ENCODE measurements at regions of chr4 and their contacts with region 1.

Region 1: DNA sequence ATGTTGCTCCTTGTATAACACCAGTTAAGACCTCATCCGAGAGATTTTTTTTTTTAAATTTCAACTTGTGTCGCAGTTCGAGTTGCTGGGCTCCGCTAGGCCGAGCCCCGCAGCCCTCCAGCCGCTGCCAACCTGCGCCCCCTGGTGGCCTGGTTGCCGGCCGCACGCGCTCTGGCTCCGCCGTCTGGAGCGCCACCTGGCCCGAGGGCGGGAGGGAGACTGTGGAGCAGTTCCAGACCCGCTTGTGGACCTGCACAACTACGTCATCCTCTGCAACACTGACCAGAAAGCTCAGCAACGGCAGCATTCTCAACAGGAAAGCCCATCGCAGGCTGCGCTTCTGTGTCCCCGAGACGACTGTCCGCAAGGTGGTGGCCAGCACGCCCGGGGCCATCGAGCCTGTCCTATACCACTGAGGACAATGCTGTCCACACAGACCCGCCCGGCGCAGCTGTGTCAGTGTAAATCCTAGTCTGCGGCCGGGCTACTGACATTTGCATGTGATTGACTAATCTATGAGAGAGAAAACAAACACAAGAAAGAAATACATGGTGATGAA is 39.1 kb downstream of the ARL9 start:
- DNase-seq: peak; percentile 75 to 86 (median 79)
- H3K4me3 ChIP-seq: peak overlapping the region; percentile 21
- H3K4me3 Mint-ChIP-seq: peak overlapping the region; percentile 38 to 76 (median 59)
- H3K27ac ChIP-seq: no peak overlapping the region
- H3K27ac Mint-ChIP-seq: peak overlapping the region in 2 of 8 donors; percentile 27 to 34
- H3K4me1 ChIP-seq: peaks cover 8% of the 10 kb centered on the region
- H3K4me1 Mint-ChIP-seq: peaks cover 11 to 20% (median 13%) of the 10 kb centered on the region in 3 donors
- H3K27me3 ChIP-seq: no peaks in the 10 kb centered on the region
- H3K27me3 Mint-ChIP-seq: peaks cover 7 to 24% of the 10 kb centered on the region in 2 donors

Region 2: DNA sequence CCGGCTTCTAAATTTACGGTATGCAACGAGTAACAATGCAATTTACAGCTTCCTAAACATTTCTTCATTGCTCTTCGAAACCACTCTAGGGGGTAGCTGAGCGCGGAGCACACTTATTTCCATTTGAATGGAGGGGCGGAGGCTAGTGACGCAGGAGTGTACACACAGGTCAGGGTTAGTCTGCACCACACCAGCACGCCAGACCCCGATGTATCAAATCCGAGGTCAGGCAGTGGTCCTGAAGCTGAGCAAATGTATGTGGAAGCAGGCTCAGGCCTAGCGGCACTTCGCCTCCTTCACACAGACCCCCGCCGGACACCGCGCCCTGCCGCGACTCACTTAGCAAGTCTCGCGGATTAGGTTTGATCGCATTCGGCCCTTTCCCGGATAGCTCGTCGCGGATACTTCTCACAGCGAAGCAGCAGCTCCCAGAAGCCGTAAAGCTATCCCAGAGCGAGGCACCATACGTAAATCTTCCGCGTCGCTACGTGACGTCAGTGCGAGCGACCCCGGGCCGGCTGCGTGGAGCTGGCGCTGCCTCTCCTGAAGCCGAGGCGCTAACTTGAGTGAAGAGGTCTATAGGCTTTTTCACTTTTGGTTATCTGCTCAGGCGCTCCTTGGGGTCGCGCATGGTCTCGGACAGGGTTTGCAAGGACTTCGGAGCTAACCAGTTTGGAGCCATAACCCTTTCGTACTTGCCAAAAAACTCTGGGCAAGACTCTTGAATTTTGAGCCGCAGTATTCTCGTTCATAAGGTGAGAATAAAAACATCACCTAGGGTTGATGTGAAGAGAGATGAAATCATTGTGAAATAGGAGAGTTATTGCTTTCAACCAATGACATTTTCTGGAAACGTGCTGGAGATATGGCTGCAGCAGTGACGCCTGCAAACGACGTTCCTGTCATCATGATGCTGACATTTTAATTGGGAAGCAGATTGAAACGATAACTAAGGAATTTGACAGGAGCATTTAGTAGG is 157.3 kb before region 1 on chr4 and contains the start of gene AASDH:
- CTCF ChIA-PET with region 1: no interaction called
- POLR2A ChIA-PET with region 1: no interaction called
- DNase-seq: peak; percentile 88 to 96 (median 94)
- H3K4me3 ChIP-seq: peak within 1 kb of the TSS; percentile 79
- H3K4me3 Mint-ChIP-seq: peak within 1 kb of the TSS; percentile 88 to 99 (median 93)
- H3K27ac ChIP-seq: peak within 1 kb of the TSS; percentile 97
- H3K27ac Mint-ChIP-seq: peak within 1 kb of the TSS; percentile 97 to 99 (median 98)
- H3K4me1 ChIP-seq: peaks cover 24% of the 10 kb centered on the region
- H3K4me1 Mint-ChIP-seq: peaks cover 39 to 50% (median 43%) of the 10 kb centered on the region in 3 donors
- H3K27me3 ChIP-seq: no peaks in the 10 kb centered on the region
- H3K27me3 Mint-ChIP-seq: no peaks in the 10 kb centered on the region
- total RNA-seq, gene AASDH: 8.5 to 13.0 TPM

Region 3: DNA sequence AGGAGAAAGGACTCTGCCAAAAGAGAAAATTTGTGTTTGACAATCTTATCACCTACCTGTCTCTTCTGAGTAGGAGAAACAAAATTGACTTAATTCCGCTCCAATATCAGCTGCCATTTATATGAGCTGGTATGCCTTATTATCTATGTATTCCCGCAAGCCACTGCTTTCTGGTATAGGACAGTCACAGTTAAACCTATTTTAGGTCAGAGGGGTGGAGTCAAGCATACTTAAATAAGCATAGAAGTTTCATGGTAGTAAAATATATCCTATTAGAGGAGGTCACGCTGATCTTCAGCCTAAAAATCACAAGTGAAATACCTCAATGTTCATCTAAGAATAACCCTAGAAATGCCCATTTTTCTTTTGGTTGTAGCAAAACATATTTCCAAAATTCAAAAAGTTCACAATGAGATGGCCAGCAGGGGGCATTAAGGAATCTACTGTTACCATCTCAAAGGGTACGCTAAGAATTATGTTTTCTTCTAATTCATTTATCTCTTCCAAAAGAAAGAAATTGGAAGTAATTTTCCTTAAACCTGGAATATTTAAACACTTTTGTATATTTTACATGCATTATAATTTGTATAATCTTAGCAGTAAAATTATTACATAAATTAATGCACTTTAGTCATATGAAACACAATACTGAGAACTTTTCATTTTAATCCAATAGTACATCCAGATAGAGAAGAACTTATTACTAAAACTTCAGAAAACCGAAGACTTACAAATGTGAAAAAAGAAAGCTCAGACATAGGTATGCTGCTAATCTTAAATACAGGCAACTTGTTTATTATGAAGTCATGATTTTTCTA is 119.7 kb before region 1 on chr4:
- CTCF ChIA-PET with region 1: interaction called, 25 read pairs
- POLR2A ChIA-PET with region 1: no interaction called
- DNase-seq: peak in 3 of 5 donors; percentile 28 to 47 (median 34)
- H3K4me3 ChIP-seq: no peak overlapping the region
- H3K4me3 Mint-ChIP-seq: no peak overlapping the region
- H3K27ac ChIP-seq: no peak overlapping the region
- H3K27ac Mint-ChIP-seq: no peak overlapping the region
- H3K4me1 ChIP-seq: no peaks in the 10 kb centered on the region
- H3K4me1 Mint-ChIP-seq: peaks cover 2 to 21% (median 3%) of the 10 kb centered on the region in 3 donors
- H3K27me3 ChIP-seq: no peaks in the 10 kb centered on the region
- H3K27me3 Mint-ChIP-seq: no peaks in the 10 kb centered on the region

Region 4: DNA sequence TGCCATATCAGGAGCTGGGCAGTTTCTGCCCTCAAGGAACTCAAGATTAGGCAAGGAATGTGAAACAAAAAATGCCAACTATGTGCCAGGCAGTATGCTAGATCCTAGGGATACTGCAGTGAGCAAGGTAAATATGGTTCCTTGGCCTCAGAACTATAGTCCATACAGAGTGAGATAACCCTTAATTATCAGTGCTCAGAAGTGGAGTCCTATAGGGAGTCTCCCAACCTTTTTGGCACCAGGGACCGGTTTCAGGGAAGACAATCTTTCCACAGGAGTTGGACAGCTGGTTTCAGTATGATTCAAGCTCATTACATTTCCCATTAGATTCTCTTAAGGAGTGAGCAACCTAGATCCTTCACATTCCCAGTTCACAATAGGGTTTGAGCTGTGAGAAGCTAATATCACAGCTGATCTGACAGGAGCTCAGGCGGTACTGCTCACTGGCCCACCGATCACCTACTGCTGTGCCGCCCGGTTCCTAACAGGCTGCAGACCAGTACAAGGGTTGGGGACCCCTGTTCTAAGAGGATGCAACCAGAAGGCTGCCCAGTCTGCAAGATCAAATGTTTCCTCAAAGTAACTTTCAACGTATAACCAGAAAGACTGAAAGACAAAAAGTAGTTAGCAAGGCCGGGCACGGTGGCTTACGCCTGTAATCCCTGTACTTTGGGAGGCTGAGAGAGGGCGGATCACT is 78.9 kb before region 1 on chr4:
- CTCF ChIA-PET with region 1: no interaction called
- POLR2A ChIA-PET with region 1: no interaction called
- DNase-seq: no peak
- H3K4me3 ChIP-seq: peak overlapping the region; percentile 97
- H3K4me3 Mint-ChIP-seq: peak overlapping the region; percentile 93 to 100 (median 98)
- H3K27ac ChIP-seq: peak overlapping the region; percentile 96
- H3K27ac Mint-ChIP-seq: peak overlapping the region; percentile 43 to 100 (median 94)
- H3K4me1 ChIP-seq: peaks cover 48% of the 10 kb centered on the region
- H3K4me1 Mint-ChIP-seq: peaks cover 59 to 73% (median 65%) of the 10 kb centered on the region in 3 donors
- H3K27me3 ChIP-seq: no peaks in the 10 kb centered on the region
- H3K27me3 Mint-ChIP-seq: no peaks in the 10 kb centered on the region

Region 5: GRCh38 chr4:56530269-56531148 is 14.1 kb before region 1 on chr4:
- CTCF ChIA-PET with region 1: interaction called, 11 read pairs
- POLR2A ChIA-PET with region 1: no interaction called
- DNase-seq: peak; percentile 63 to 84 (median 69)
- H3K4me3 ChIP-seq: peak overlapping the region; percentile 86
- H3K4me3 Mint-ChIP-seq: no peak overlapping the region
- H3K27ac ChIP-seq: peak overlapping the region; percentile 11
- H3K27ac Mint-ChIP-seq: peak overlapping the region in 3 of 8 donors; percentile 35 to 86 (median 49)
- H3K4me1 ChIP-seq: peaks cover 6% of the 10 kb centered on the region
- H3K4me1 Mint-ChIP-seq: peaks cover 0 to 10% (median 4%) of the 10 kb centered on the region in 3 donors
- H3K27me3 ChIP-seq: peaks cover 17% of the 10 kb centered on the region
- H3K27me3 Mint-ChIP-seq: peaks cover 0 to 9% of the 10 kb centered on the region in 2 donors

Measured in CD8-positive, alpha-beta memory T cell (primary cell).